ENCODE measurements at regions of chr12 and their contacts with region 1.

Region 1: GRCh38 chr12:97274386-97274785 is 188.2 kb upstream of the RMST start:
- DNase-seq: no peak
- H3K4me3 ChIP-seq: no peak overlapping the region
- CTCF ChIP-seq: no peak

Region 2: DNA sequence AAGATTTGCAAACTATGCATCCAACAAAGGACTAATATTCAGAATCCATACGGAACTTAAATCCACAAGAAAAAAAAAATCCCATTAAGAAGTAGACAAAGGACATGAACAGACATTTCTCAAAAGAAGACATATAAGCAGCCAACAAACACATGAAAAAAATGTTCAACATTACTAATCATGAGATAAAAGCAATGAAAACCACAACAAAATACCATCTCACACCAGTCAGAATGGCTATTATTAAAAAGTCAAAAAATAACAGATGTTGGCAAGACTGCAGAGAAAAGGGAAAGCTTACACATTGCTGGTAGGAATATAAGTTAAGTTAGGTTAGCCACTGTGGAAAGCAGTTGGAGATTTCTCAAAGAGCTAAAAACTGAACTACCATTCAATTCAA is 890.4 kb before region 1 on chr12:
- in situ Hi-C with region 1: no loop called
- DNase-seq: peak; percentile 68
- H3K4me3 ChIP-seq: no peak overlapping the region
- CTCF ChIP-seq: no peak

Region 3: GRCh38 chr12:97177481-97177880 is 96.9 kb before region 1 on chr12:
- in situ Hi-C with region 1: no loop called
- DNase-seq: peak; percentile 55
- H3K4me3 ChIP-seq: no peak overlapping the region
- CTCF ChIP-seq: no peak

Region 4: GRCh38 chr12:97223419-97223818 is 51.0 kb before region 1 on chr12:
- in situ Hi-C with region 1: loop called (anchors 5 kb)
- DNase-seq: no peak
- H3K4me3 ChIP-seq: no peak overlapping the region
- CTCF ChIP-seq: no peak

Region 5: DNA sequence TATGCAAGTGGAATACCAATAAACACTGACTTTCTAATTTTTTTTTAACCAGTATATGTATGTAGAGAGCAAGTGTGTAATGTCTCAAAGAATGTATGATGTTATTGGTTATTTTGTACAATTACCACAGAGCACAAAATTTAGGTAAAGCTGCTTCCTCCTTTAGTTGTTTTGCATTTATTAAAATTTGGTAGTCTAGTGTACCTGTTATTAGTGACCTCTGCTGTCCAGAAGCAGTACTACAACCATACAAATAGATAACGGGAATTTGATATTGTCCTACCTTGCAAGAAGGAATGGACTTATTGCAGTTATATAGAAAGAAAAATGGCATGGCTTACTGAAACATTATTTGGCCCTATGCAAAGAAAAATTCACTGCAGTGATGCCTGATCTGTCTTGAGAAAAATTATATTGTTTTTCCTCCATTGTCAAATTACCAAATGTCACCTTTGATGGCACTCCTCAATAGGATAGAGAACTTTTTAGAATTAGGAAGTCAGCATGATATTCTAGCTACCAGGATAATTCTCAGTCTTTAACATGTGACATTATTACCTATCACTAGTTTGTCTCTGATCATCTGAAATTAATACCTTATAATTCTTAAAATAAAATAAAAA is 34.3 kb after region 1 on chr12:
- in situ Hi-C with region 1: no loop called
- DNase-seq: peak; percentile 62
- H3K4me3 ChIP-seq: no peak overlapping the region
- CTCF ChIP-seq: peak; percentile 55

Region 6: DNA sequence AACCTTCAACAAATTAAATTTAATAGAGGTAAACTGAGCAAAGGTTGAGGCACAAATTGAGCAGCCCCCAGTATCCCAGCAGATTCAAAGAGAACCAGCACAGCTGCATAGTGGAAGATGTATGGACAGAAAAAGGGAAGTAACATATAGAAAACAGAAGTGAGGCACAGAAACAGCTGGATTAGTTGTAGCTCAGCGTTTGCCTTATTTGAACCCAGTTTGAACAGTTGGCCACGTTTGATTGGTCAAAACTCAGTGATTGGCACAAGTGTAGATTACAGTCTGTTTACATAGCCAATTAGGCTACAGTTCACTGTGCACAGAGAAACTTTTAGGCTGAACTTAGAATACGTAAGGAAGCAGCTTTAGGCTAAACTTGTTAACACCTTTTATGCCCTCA is 503.7 kb after region 1 on chr12:
- in situ Hi-C with region 1: no loop called
- DNase-seq: no peak
- H3K4me3 ChIP-seq: no peak overlapping the region
- CTCF ChIP-seq: no peak

Measured in astrocyte of the cerebellum (primary cell).